ENCODE measurements at regions of chr17 and their contacts with region 1.

Region 1: GRCh38 chr17:80101011-80101945 is at the start of gene GAA:
- DNase-seq: peak; percentile 84
- H3K4me3 Mint-ChIP-seq: peak within 1 kb of the TSS; percentile 84
- H3K27ac Mint-ChIP-seq: peak within 1 kb of the TSS; percentile 73
- H3K4me1 Mint-ChIP-seq: peaks cover 23% of the 10 kb centered on the region
- H3K27me3 Mint-ChIP-seq: no peaks in the 10 kb centered on the region
- total RNA-seq, gene GAA: 23.6 and 26.1 TPM in 2 replicates

Region 2: GRCh38 chr17:80147035-80147836 is 46.0 kb after region 1 on chr17 and contains the start of gene EIF4A3:
- intact Hi-C with region 1: loop called (anchors 5 kb)
- DNase-seq: peak; percentile 98
- H3K4me3 Mint-ChIP-seq: peak within 1 kb of the TSS; percentile 97
- H3K27ac Mint-ChIP-seq: peak within 1 kb of the TSS; percentile 94
- H3K4me1 Mint-ChIP-seq: peaks cover 27% of the 10 kb centered on the region
- H3K27me3 Mint-ChIP-seq: no peaks in the 10 kb centered on the region
- total RNA-seq, gene EIF4A3: 167 and 169 TPM in 2 replicates

Measured in activated T-helper 2 cell treated with anti-CD3 and anti-CD28 coated beads, Interferon-gamma antibody, Interleukin-2, Interleukin-4, amounts not matched to agents 10 μg/mL and 5 μg/mL and 100 μg/mL, durations not matched to agents 14 hours and 24 hours and 36 hours (primary cell).